Gastrocnemius medialis (tissue), 4 donors: ENCODE measurements at regions of chr5 and their contacts with region 1.

Region 1: GRCh38 chr5:157193699-157194424 is 13.2 kb downstream of the ITK start:
- DNase-seq: no peak
- ATAC-seq: no peak
- H3K4me3 ChIP-seq: no peak overlapping the region
- H3K27ac ChIP-seq: no peak overlapping the region
- H3K4me1 ChIP-seq: peaks cover 0 to 6% of the 10 kb centered on the region in 2 donors
- H3K27me3 ChIP-seq: no peaks in the 10 kb centered on the region
- CTCF ChIP-seq: no peak
- POLR2A ChIP-seq: no peak

Region 2: DNA sequence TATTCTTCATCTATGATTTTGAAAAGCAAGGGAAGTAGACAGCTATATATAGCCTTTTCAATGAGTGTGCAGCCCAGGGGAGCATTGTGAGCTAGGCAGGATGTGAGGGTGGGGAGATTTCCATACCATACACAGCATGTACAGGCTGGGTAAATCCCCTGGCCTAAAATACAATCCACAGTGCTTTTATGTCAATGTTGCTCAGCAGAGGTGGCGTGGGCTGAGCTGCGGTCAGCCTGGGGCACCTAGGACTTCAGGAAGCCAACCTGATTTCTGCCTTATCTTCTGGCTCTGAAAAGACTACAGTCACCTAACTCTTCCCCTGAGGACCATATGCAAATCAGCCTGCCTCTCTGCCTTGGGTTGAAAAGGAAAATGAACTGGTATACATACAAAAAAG is 21.5 kb before region 1 on chr5:
- in situ Hi-C with region 1: no loop called
- intact Hi-C with region 1: loop called (anchors 1 kb)
- DNase-seq: no peak
- ATAC-seq: no peak
- H3K4me3 ChIP-seq: no peak overlapping the region
- H3K27ac ChIP-seq: no peak overlapping the region
- H3K4me1 ChIP-seq: no peaks in the 10 kb centered on the region
- H3K27me3 ChIP-seq: no peaks in the 10 kb centered on the region
- CTCF ChIP-seq: no peak
- POLR2A ChIP-seq: no peak